Dorsolateral prefrontal cortex (tissue), 120 donors: ENCODE measurements at regions of chr10 and their contacts with region 1.

Region 1: GRCh38 chr10:73591935-73592699 is 975 bp upstream of the USP54 start:
- DNase-seq: peak; percentile 11 to 89 (median 76)
- H3K4me3 ChIP-seq: peak overlapping the region in 57 of 59 donors; percentile 9 to 69 (median 54)
- H3K27ac ChIP-seq: peak overlapping the region; percentile 30 to 99 (median 95)
- H3K27me3 ChIP-seq: no peaks in the 10 kb centered on the region
- CTCF ChIP-seq: peak in 9 of 56 donors; percentile 4 to 16 (median 12)

Region 2: GRCh38 chr10:73529089-73529832 is 62.9 kb before region 1 on chr10:
- intact Hi-C with region 1: loop called in 1 of 2 experiments (anchors 1 kb)
- DNase-seq: peak in 4 of 10 donors; percentile 27 to 53 (median 52)
- H3K4me3 ChIP-seq: no peak overlapping the region
- H3K27ac ChIP-seq: peak overlapping the region in 45 of 59 donors; percentile 9 to 81 (median 51)
- H3K27me3 ChIP-seq: no peaks in the 10 kb centered on the region
- CTCF ChIP-seq: peak; percentile 63 to 98 (median 90)

Region 3: GRCh38 chr10:73552819-73553715 is 39.0 kb before region 1 on chr10:
- intact Hi-C with region 1: loop called (anchors 2 to 5 kb)
- DNase-seq: peak; percentile 44 to 94 (median 84)
- H3K4me3 ChIP-seq: peak overlapping the region in 34 of 59 donors; percentile 1 to 46 (median 18)
- H3K27ac ChIP-seq: peak overlapping the region; percentile 80 to 99 (median 96)
- H3K27me3 ChIP-seq: no peaks in the 10 kb centered on the region
- CTCF ChIP-seq: peak in 6 of 56 donors; percentile 6 to 34 (median 16)

Region 4: DNA sequence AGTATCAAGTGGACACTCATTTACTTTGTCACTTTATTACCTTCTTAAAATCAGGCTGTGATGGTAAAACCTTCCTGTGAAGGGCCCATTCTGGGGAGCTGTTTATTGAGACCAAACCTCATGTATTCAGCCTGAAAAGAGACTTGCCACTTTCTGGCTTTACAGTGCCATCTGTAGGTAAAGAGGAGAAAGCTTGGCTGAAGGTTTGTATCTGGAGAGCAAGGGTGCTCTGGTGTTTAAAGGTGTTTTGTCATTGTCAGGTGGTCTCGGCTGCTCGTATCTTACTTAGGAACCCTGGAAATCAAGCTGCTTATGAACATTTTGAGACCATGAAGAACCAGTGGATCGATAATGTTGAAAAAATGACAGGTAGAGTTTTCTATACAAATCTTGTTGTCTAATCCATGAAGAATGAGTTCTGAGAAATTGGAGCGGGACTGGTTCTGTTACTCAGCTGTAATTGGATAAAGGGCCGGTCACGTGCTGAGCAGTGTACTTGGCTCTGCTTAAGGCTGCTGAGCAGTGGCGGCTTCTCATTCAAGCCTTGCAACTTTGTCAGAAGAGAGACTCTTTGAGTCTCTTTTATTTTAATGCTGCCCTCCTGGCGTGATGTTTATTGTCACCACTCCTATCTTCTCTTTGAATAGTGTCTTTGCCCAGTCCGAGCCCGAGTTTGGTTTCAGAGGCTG is 511.6 kb after region 1 on chr10:
- intact Hi-C with region 1: no loop called
- DNase-seq: peak in 3 of 10 donors; percentile 10 to 48 (median 37)
- H3K4me3 ChIP-seq: no peak overlapping the region
- H3K27ac ChIP-seq: peak overlapping the region in 17 of 59 donors; percentile 3 to 70 (median 47)
- H3K27me3 ChIP-seq: no peaks in the 10 kb centered on the region
- CTCF ChIP-seq: peak in 41 of 56 donors; percentile 10 to 55 (median 27)